ENCODE measurements at regions of chr14 and their contacts with region 1.

Region 1: GRCh38 chr14:99628832-99629618 is 15.9 kb upstream of the HHIPL1 start:
- DNase-seq: peak; percentile 18
- ATAC-seq: peak; percentile 89
- H3K4me3 ChIP-seq: no peak overlapping the region
- H3K27ac ChIP-seq: no peak overlapping the region
- H3K4me1 ChIP-seq: peaks cover 5% of the 10 kb centered on the region; the same call in 1 of the 2 replicates
- H3K27me3 ChIP-seq: peaks cover 9 to 37% of the 10 kb centered on the region in 2 experiments; a peak in 4 of 5 replicates
- CTCF ChIP-seq: peak; percentile 98
- EP300 ChIP-seq: no peak
- POLR2A ChIP-seq: no peak
- RAD21 ChIP-seq: peak; percentile 98

Region 2: DNA sequence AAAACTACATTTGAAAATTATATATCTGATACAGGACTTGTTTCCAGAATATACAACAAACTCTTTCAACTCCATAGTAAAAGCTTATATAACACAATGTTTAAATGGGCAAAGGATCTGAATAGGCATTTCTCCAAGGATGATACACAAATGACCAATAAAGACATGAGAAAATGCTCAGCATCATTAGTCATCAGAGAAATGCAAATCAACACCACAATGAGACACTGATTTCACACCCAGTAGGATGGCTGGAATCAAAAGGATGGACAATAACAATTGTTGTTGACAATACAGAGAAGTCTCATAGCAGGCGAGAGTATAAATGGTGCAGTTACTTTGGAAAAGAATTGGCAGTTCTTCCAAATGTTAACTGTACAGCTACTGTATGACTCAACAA is 752.0 kb before region 1 on chr14:
- CTCF ChIA-PET with region 1: no interaction called
- POLR2A ChIA-PET with region 1: no interaction called
- in situ Hi-C with region 1: no loop called
- intact Hi-C with region 1: no loop called
- DNase-seq: no peak
- ATAC-seq: no peak
- H3K4me3 ChIP-seq: no peak overlapping the region
- H3K27ac ChIP-seq: no peak overlapping the region
- H3K4me1 ChIP-seq: no peaks in the 10 kb centered on the region
- H3K27me3 ChIP-seq: no peaks in the 10 kb centered on the region
- CTCF ChIP-seq: no peak
- EP300 ChIP-seq: no peak
- POLR2A ChIP-seq: no peak
- RAD21 ChIP-seq: no peak

Region 3: DNA sequence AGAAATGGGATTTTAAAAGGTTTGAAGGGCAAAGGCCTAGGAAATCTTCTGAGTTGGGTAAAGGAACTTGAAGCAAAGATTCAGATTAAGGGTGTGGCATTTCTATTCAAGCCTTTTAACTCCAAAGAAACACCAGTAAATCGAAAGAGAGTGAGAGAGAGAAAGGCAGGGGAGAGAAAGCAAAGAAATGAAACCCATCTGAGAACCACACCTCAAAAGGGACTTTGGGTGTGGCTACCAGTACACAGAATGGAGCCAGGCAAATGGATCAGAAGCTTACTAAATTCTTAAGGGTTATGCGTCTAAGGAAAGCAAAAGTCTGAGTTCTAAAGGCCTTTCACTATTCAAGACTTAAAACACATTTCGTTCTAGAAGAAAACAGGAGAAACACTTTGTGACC is 634.5 kb before region 1 on chr14:
- CTCF ChIA-PET with region 1: no interaction called
- POLR2A ChIA-PET with region 1: no interaction called
- in situ Hi-C with region 1: no loop called
- intact Hi-C with region 1: no loop called
- DNase-seq: no peak
- ATAC-seq: no peak
- H3K4me3 ChIP-seq: no peak overlapping the region
- H3K27ac ChIP-seq: no peak overlapping the region
- H3K4me1 ChIP-seq: no peaks in the 10 kb centered on the region
- H3K27me3 ChIP-seq: no peaks in the 10 kb centered on the region
- CTCF ChIP-seq: no peak
- EP300 ChIP-seq: no peak
- POLR2A ChIP-seq: no peak
- RAD21 ChIP-seq: no peak

Region 4: DNA sequence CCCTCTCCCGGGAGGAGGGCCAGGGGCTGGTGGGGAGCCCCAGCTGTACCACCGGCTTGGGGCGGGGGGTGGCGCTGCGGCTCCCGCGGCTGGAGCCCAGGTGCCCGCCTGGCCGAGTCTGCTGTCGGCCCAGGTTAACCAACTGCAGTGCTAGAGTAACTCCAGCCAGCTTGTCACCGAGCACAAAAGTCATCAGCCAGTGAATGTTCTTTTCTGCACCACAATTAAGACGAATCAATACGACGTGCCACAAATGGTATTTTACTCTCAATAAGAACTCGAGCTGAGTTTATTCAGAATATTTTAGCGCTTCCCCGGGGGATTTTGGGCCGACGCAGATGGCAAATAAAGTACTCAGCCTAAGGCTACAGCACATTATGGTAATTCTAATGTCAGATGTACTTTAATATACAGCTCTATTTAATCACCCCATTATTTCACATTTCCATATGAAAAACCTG is 440.3 kb before region 1 on chr14:
- CTCF ChIA-PET with region 1: no interaction called
- POLR2A ChIA-PET with region 1: no interaction called
- in situ Hi-C with region 1: no loop called
- intact Hi-C with region 1: no loop called
- DNase-seq: no peak
- ATAC-seq: peak; percentile 52
- H3K4me3 ChIP-seq: no peak overlapping the region
- H3K27ac ChIP-seq: no peak overlapping the region
- H3K4me1 ChIP-seq: 0 out of 2 replicates have a peak, but pooled peaks cover 10% of the 10 kb centered on the region
- H3K27me3 ChIP-seq: peaks cover 6 to 70% of the 10 kb centered on the region in 2 experiments
- CTCF ChIP-seq: no peak
- EP300 ChIP-seq: no peak
- POLR2A ChIP-seq: no peak
- RAD21 ChIP-seq: no peak

Region 5: DNA sequence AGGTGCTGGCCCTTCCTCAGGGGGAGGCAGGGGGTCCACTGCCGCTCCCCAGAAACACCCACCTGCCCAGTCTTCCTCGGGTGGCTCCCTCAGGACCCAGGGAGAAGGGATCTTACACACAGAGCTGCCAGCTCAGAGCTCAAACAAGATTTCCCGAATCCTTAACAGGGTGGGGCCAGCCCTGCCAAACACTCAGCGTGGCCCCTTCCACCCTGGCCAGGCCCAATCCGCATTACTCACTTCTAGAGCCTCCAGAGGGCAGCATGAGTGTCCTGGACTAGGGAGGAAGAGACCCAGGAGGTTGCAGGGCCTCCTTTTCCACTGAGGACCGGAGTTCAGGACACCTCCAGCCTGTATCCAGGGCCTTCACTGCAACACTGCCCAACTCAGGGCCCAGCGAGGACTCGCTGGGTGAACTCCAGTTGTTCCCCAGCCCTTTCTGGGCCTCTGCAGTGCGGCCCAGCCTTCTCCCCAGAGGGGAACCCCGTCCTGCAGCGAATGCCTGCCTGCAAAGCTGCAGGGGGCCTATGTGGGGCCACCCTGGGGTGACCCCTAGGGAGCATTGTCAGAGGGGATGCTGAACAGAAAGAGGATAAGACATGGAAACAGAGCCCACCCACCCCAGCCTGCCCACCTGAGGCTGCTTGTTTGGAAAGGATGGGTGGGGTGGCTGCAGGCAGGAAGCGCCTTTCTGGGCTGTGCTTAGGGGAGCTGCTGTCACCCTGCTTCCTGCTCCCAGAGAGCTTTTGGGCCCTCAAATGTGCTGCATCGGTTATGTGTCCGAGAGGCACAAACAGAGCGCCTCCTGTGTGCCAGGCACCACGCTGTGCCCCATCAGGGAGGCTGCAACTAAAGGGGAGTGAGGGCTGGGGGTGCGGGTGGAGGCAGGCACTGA is 104.0 kb before region 1 on chr14:
- CTCF ChIA-PET with region 1: interaction called, 29 read pairs
- POLR2A ChIA-PET with region 1: no interaction called
- in situ Hi-C with region 1: loop called (anchors 5 kb)
- intact Hi-C with region 1: no loop called
- DNase-seq: no peak
- ATAC-seq: peak; percentile 41
- H3K4me3 ChIP-seq: no peak overlapping the region
- H3K27ac ChIP-seq: no peak overlapping the region
- H3K4me1 ChIP-seq: peaks cover 21% of the 10 kb centered on the region
- H3K27me3 ChIP-seq: no peaks in the 10 kb centered on the region
- CTCF ChIP-seq: peak; percentile 64
- EP300 ChIP-seq: no peak
- POLR2A ChIP-seq: no peak
- RAD21 ChIP-seq: no peak

Region 6: DNA sequence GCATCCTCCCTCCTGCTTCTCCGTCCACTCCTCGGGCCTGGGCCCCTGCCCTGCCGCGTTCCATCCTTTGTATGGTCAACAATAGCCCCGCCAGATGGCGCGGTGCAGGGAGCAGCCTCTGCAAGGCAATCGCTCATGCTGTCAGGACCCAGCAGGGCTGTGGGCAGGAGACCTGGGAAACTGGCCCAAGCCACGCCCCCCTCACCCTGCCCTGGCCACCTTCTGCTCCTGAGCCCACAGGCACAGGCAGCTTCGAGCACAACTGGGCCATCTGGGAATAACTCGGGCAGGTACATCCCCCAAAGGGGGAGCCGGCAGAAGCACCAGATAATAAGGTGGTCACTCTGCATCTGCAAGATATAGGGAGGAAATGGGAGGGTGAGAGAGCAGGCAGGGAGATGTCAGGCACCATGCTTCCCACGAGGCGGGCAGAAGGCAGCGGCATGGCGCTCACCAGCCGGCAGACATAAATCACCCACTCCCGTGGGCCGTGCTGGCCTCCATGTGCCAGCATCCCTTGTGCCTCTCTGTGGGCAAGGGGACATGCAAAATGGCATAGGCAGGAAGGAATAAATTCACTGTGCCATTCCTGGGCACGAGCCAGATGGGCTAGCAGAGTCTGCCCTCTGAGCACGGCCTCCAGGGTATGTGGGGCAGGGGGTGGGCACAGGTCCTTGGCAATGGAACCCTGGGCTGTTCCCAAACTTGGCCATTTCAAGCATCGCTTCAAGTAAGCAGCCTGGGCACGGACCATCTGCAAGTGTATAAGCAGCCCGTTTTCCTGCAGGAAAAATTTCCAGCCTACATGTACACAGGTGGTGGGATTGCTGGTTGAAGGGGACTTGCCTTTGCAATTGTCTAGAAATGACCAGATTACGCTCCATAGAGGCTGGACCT is 65.5 kb before region 1 on chr14:
- CTCF ChIA-PET with region 1: interaction called, 11 read pairs
- POLR2A ChIA-PET with region 1: no interaction called
- in situ Hi-C with region 1: no loop called
- intact Hi-C with region 1: loop called (anchors 5 kb)
- DNase-seq: peak; percentile 84
- ATAC-seq: peak; percentile 82
- H3K4me3 ChIP-seq: no peak overlapping the region
- H3K27ac ChIP-seq: peak overlapping the region; percentile 91
- H3K4me1 ChIP-seq: peaks cover 92% of the 10 kb centered on the region
- H3K27me3 ChIP-seq: no peaks in the 10 kb centered on the region
- CTCF ChIP-seq: peak; percentile 94
- EP300 ChIP-seq: no peak
- POLR2A ChIP-seq: no peak
- RAD21 ChIP-seq: peak; percentile 96

Region 7: GRCh38 chr14:99597911-99598600 is 31.0 kb before region 1 on chr14:
- CTCF ChIA-PET with region 1: no interaction called
- POLR2A ChIA-PET with region 1: no interaction called
- in situ Hi-C with region 1: no loop called
- intact Hi-C with region 1: no loop called
- DNase-seq: no peak
- ATAC-seq: no peak
- H3K4me3 ChIP-seq: peak overlapping the region in 1 of 3 experiments; percentile 85; a peak in 1 of 6 replicates
- H3K27ac ChIP-seq: peak overlapping the region; percentile 80
- H3K4me1 ChIP-seq: peaks cover 74% of the 10 kb centered on the region
- H3K27me3 ChIP-seq: no peaks in the 10 kb centered on the region; a peak in 1 of 5 replicates
- CTCF ChIP-seq: no peak
- EP300 ChIP-seq: no peak
- POLR2A ChIP-seq: no peak
- RAD21 ChIP-seq: no peak